Prostate gland (tissue), 2 donors: ENCODE measurements at regions of chr17 and their contacts with region 1.

Region 1: GRCh38 chr17:47229535-47230443 is 20.6 kb downstream of the MYL4 start:
- DNase-seq: peak; percentile 85
- H3K4me3 ChIP-seq: no peak overlapping the region
- H3K27ac ChIP-seq: no peak overlapping the region
- H3K4me1 ChIP-seq: no peaks in the 10 kb centered on the region
- H3K27me3 ChIP-seq: no peaks in the 10 kb centered on the region
- CTCF ChIP-seq: peak; percentile 94 to 98 (median 97)
- POLR2A ChIP-seq: no peak

Region 2: GRCh38 chr17:47184681-47185080 is 45.1 kb before region 1 on chr17:
- intact Hi-C with region 1: no loop called
- DNase-seq: no peak
- H3K4me3 ChIP-seq: no peak overlapping the region
- H3K27ac ChIP-seq: no peak overlapping the region
- H3K4me1 ChIP-seq: peaks cover 3% of the 10 kb centered on the region
- H3K27me3 ChIP-seq: no peaks in the 10 kb centered on the region
- CTCF ChIP-seq: no peak
- POLR2A ChIP-seq: no peak

Region 3: GRCh38 chr17:47315451-47316266 is 85.9 kb after region 1 on chr17:
- intact Hi-C with region 1: loop called (anchors 2 kb)
- DNase-seq: peak; percentile 28
- H3K4me3 ChIP-seq: no peak overlapping the region
- H3K27ac ChIP-seq: no peak overlapping the region
- H3K4me1 ChIP-seq: no peaks in the 10 kb centered on the region
- H3K27me3 ChIP-seq: no peaks in the 10 kb centered on the region
- CTCF ChIP-seq: peak; percentile 41 to 85 (median 74)
- POLR2A ChIP-seq: no peak